ENCODE measurements at regions of chr1 and their contacts with region 1.

Region 1: DNA sequence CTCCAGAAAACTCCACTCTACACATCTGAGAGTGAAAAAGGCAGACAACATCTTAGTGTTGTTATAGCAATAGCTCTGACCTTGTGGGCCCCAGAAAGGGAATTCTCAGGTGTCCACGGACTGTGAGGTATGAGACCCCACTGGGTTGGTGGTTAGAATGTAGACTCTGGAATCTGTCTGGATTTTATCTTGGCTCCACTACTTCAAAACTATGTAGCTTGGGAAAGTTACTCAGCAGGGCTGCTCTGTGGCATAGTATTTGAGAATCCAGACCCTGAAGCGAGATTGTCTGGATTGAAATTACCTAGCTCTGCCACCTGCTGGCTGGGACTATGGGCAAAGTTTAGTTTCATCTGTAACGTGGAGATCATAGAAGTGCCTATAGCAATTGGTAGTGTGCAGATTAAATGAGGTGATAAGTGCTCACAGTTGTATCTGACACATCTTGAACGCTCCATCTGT is 25.8 kb downstream of the PRDM2 start:
- DNase-seq: peak; percentile 74
- H3K4me3 Mint-ChIP-seq: no peak overlapping the region
- H3K27ac Mint-ChIP-seq: no peak overlapping the region
- H3K4me1 Mint-ChIP-seq: peaks cover 39% of the 10 kb centered on the region
- H3K27me3 Mint-ChIP-seq: no peaks in the 10 kb centered on the region

Region 2: DNA sequence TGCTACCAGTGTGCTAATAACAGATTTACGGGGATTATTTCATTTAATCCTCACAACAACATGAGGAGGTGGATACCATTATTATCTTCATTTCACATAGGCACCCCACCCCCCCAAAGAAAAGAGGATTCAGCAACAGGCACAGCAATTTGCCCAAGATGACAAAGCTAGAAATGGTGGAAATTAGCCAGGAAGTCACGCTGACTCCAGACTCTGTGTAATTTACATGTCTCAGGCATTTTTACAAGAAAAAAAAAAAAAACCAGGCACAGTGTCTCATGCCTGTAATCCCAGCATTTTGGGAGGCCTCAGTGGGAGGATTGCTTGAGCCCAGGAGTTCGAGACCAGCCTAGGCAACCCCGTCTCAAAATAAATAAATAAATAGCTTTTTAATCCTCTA is 63.3 kb before region 1 on chr1:
- CTCF ChIA-PET with region 1: interaction called, 18 read pairs
- intact Hi-C with region 1: loop called (anchors 1 kb)
- DNase-seq: no peak
- H3K4me3 Mint-ChIP-seq: no peak overlapping the region
- H3K27ac Mint-ChIP-seq: no peak overlapping the region
- H3K4me1 Mint-ChIP-seq: peaks cover 4% of the 10 kb centered on the region
- H3K27me3 Mint-ChIP-seq: peaks cover 5% of the 10 kb centered on the region

Region 3: DNA sequence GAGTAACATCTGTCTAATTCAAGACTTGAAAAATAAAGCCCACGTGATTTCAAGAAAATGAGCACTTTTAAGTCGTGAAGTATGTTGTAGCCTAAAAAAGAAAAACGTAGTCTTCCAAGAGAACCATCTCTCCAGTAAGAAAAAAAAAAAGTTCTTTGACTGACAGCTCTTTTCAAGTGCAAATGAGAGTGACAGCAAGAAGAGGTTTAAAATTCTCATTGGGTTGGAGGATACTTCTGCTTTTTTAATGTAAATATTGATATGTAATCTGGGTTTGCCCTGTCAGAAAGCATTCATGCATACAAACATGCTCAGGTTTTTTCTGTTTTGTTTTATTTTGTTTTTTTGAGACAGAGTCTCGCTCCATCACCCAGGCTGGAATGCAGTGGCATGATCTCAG is 58.1 kb before region 1 on chr1:
- CTCF ChIA-PET with region 1: interaction called, 18 read pairs
- intact Hi-C with region 1: loop called (anchors 1 kb)
- DNase-seq: no peak
- H3K4me3 Mint-ChIP-seq: no peak overlapping the region
- H3K27ac Mint-ChIP-seq: no peak overlapping the region
- H3K4me1 Mint-ChIP-seq: peaks cover 4% of the 10 kb centered on the region
- H3K27me3 Mint-ChIP-seq: peaks cover 2% of the 10 kb centered on the region

Region 4: DNA sequence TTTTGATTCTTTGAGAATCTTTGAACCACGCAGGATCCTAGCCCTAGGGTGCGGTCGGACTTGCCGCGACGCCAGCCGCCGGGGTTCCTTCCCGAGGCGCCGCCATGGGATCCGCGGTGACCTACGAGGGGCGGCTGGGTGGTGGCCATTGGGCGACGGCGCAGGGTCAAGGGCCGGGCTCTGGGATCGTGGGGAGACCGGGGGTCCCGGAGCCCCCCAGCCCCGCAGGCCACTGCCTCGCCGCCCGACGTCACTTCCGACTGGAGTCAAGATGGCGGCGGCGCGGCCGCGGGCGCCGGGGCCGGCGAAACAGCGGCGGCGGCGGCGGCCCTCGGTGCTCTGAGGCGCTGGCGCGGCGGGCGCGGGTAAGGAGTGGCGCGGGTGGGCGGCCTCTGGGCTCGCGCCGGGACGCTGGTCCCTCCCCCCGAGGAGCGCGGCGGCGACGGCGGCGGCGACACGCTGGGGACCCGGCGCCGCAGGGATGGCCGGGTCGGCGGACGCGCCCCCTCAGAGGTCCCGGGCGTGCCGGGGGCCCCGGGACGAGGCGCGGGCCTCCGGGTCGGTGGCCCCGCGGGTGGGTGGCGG is 25.7 kb before region 1 on chr1 and contains the start of gene PRDM2:
- CTCF ChIA-PET with region 1: interaction called, 12 read pairs
- intact Hi-C with region 1: no loop called
- DNase-seq: peak; percentile 49
- H3K4me3 Mint-ChIP-seq: peak within 1 kb of the TSS; percentile 88
- H3K27ac Mint-ChIP-seq: peak within 1 kb of the TSS; percentile 94
- H3K4me1 Mint-ChIP-seq: peaks cover 42% of the 10 kb centered on the region
- H3K27me3 Mint-ChIP-seq: no peaks in the 10 kb centered on the region
- total RNA-seq, gene PRDM2: 33.8 to 37.3 TPM

Region 5: GRCh38 chr1:13707164-13707563 is 18.6 kb before region 1 on chr1:
- CTCF ChIA-PET with region 1: interaction called, 12 read pairs
- intact Hi-C with region 1: no loop called
- DNase-seq: no peak
- H3K4me3 Mint-ChIP-seq: no peak overlapping the region
- H3K27ac Mint-ChIP-seq: no peak overlapping the region
- H3K4me1 Mint-ChIP-seq: peaks cover 64% of the 10 kb centered on the region
- H3K27me3 Mint-ChIP-seq: no peaks in the 10 kb centered on the region

Region 6: DNA sequence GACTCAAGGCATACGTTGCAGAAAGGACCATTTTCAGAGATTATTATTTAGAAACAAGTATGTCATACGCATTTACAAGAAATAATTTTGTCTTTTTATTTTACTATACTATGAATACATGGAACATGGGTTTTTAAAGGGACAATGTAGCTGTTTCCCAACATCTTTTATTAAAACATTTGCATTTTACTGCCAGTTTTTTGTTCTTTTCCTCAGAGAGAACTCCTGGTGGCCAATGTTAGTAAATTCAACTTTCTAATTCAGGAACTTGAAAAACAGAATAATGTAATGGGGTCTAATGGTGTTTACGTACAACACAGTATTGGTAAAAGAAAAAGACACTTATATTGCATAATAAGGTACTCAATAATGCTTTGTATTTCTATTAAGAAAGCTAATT is 10.9 kb before region 1 on chr1:
- CTCF ChIA-PET with region 1: interaction called, 10 read pairs
- intact Hi-C with region 1: no loop called
- DNase-seq: no peak
- H3K4me3 Mint-ChIP-seq: no peak overlapping the region
- H3K27ac Mint-ChIP-seq: no peak overlapping the region
- H3K4me1 Mint-ChIP-seq: peaks cover 31% of the 10 kb centered on the region
- H3K27me3 Mint-ChIP-seq: no peaks in the 10 kb centered on the region

Region 7: GRCh38 chr1:13864760-13865159 is 139.0 kb after region 1 on chr1:
- CTCF ChIA-PET with region 1: no interaction called
- intact Hi-C with region 1: no loop called
- DNase-seq: no peak
- H3K4me3 Mint-ChIP-seq: no peak overlapping the region
- H3K27ac Mint-ChIP-seq: no peak overlapping the region
- H3K4me1 Mint-ChIP-seq: no peaks in the 10 kb centered on the region
- H3K27me3 Mint-ChIP-seq: peaks cover 3% of the 10 kb centered on the region

Region 8: DNA sequence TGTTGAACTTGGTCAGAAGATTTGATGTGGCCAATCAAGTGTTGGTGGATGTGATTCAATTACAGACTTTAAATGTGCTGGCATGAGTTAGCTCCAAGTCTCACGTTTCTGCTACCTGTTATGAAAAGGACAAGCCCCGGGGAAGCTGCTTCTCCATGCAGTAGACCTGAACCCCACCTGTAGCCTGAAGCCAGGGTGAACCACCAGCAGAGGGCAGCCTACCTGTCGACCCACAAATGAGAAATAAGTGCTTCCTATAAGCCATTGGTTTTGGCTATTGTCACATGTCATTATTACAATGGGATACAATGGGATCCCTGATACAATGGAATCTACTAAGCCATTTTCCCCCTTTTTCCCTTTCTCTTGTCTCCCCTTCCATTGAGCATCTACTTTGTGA is 204.4 kb after region 1 on chr1:
- CTCF ChIA-PET with region 1: no interaction called
- intact Hi-C with region 1: no loop called
- DNase-seq: peak; percentile 44
- H3K4me3 Mint-ChIP-seq: no peak overlapping the region
- H3K27ac Mint-ChIP-seq: no peak overlapping the region
- H3K4me1 Mint-ChIP-seq: no peaks in the 10 kb centered on the region
- H3K27me3 Mint-ChIP-seq: peaks cover 13% of the 10 kb centered on the region

Measured in activated naive CD4-positive, alpha-beta T cell treated with anti-CD3 and anti-CD28 coated beads for 36 hours (primary cell).